Left ventricle myocardium inferior (tissue), 1 donor: ENCODE measurements at regions of chr9 and their contacts with region 1.

Region 1: DNA sequence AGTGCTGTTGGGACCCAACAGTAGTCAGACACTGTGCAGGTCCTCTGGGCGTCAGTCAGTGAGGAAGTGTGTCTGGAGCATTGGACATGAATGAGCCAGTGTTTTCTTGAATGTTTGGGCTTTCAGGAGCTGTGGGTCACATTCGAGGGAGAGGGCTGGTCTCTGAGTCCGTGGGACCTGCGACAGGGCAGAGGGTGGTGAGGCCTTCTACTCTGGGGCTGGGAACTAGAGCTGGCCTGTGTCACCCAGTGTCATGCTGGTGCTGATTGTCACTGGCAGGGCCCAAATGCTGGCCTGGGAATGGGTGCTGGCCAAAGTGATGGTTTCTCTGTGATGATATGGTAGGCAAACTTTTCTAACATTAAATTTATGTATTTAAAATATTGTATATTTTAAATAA is 10.3 kb downstream of the POLR1E start:
- DNase-seq: no peak
- H3K4me3 ChIP-seq: no peak overlapping the region
- H3K27ac ChIP-seq: no peak overlapping the region
- H3K4me1 ChIP-seq: no peaks in the 10 kb centered on the region
- H3K27me3 ChIP-seq: no peaks in the 10 kb centered on the region
- CTCF ChIP-seq: no peak

Region 2: GRCh38 chr9:37430841-37431597 is 65.0 kb before region 1 on chr9:
- intact Hi-C with region 1: loop called (anchors 10 kb)
- DNase-seq: no peak
- H3K4me3 ChIP-seq: no peak overlapping the region
- H3K27ac ChIP-seq: no peak overlapping the region
- H3K4me1 ChIP-seq: peaks cover 31% of the 10 kb centered on the region
- H3K27me3 ChIP-seq: no peaks in the 10 kb centered on the region
- CTCF ChIP-seq: no peak